Activated CD4-positive, alpha-beta memory T cell treated with anti-CD3 and anti-CD28 coated beads for 36 hours (primary cell): ENCODE measurements at regions of chr4 and their contacts with region 1.

Region 1: GRCh38 chr4:164716901-164717300 is 37.0 kb upstream of the SMIM31 start:
- DNase-seq: no peak
- H3K4me3 Mint-ChIP-seq: no peak overlapping the region
- H3K27ac Mint-ChIP-seq: no peak overlapping the region
- H3K4me1 Mint-ChIP-seq: no peaks in the 10 kb centered on the region
- H3K27me3 Mint-ChIP-seq: peaks cover 5% of the 10 kb centered on the region

Region 2: DNA sequence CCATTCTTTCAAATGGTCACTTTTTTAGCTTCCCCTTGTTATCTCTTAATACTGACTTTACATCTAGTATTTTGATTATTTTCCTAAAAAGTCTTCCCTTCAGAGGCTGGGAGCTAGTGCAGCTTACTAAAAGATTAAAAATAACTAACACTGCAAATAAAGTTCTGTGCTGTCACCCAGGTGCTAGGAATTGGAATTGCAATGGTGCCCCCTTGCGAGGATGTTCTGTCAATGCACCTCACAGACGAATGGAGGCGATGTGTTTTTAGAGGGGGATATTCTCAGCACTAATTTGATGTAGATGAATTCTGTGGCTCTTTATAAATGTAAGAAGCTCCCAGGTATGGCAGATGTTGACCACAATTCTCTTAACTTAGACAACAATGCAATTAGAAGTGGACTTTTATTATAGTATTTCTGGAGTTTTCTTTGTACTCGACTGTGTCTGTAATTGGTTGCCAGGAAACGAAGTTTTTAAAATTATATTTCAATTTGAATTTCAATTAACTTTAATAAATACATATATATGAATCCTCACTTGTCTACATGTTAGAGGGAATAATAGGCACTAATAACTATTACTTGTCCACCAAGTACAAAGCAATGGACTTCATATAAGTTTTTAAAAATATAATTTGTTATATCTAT is 15.1 kb after region 1 on chr4:
- CTCF ChIA-PET with region 1: interaction called, 20 read pairs
- POLR2A ChIA-PET with region 1: no interaction called
- intact Hi-C with region 1: no loop called
- DNase-seq: peak; percentile 63
- H3K4me3 Mint-ChIP-seq: no peak overlapping the region
- H3K27ac Mint-ChIP-seq: no peak overlapping the region
- H3K4me1 Mint-ChIP-seq: no peaks in the 10 kb centered on the region
- H3K27me3 Mint-ChIP-seq: peaks cover 6% of the 10 kb centered on the region